HepG2 (cell line): ENCODE measurements at regions of chr16 and their contacts with region 1.

Region 1: DNA sequence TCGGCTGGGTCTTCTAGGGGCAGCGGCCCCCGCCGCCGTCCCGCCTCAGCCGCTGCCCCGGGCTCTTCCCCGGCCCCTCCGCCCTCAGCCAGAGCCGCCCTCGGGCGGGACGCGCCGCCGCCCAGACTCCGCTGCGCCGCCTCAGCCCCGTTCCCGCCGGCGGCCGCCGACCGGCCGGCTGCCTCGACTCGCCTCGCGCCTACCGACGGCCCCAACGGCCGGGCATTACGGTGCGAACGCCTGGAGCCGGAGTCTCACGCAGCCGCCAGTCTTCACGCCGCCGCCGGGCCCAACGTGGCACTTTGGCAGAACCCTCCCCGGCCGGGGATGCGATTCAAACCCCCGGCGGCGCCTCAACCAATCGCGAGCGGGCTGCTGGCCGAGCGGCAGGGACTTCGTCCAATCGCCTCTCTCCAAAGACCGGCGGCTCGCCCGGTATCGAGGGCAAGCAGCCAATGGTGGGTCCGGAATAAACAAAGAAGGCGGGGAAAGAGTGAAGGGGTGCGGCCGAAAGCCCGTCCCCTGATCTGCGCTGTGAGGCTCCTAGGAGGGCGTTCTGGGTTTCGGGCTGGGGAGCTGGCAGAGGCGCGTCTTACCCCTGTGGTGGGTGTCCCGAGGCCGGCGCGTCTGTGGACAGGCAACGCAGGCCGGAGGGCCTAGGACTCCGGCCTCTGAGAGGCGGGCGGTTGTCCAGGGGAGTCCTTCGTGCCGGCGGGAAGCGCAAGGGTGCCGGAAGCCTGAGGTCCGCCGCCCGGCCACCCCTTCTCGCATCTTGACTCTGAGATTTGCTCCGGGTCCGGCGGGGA is at the start of gene CDR2:
- DNase-seq: peak; percentile 98
- ATAC-seq: peak; percentile 93
- H3K4me3 ChIP-seq: peak within 1 kb of the TSS; percentile 81 to 98 (median 87)
- H3K27ac ChIP-seq: peak within 1 kb of the TSS; percentile 85
- H3K4me1 ChIP-seq: peaks cover 52% of the 10 kb centered on the region
- H3K27me3 ChIP-seq: no peaks in the 10 kb centered on the region; a peak in 1 of 5 replicates
- CTCF ChIP-seq: peak; percentile 8; the same call in 1 of the 2 replicates
- EP300 ChIP-seq: 0 out of 4 replicates have a peak, but pooled peaks of 1 of the 2 experiments have one; percentile 22
- POLR2A ChIP-seq: peak; percentile 91 to 93
- RAD21 ChIP-seq: peak; percentile 79
- total RNA-seq, gene CDR2: 59.0 and 76.7 TPM in 2 replicates

Region 2: DNA sequence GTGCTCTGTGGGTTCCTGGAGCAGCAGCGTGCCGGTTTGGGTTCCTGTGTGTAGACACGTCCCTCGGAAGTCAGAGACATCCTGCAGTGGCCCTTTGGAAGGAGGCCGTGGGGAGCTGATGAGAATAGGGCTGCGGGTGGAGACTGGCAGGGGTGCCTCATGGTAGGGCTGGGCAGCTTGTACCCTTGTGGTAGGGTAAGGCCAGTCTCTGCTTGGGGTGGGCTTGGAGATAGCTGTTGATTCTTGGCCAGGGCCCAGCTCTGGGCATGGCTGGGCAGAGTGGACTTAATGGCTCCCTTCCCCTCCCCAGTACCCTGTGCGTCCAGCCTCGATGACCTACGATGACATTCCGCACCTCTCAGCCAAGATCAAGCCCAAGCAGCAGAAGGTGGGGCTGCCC is 66.7 kb before region 1 on chr16:
- CTCF ChIA-PET with region 1: no interaction called
- POLR2A ChIA-PET with region 1: no interaction called
- in situ Hi-C with region 1: no loop called
- intact Hi-C with region 1: no loop called
- DNase-seq: no peak
- ATAC-seq: 0 out of 3 replicates have a peak, but pooled peaks have one; percentile 3
- H3K4me3 ChIP-seq: no peak overlapping the region
- H3K27ac ChIP-seq: no peak overlapping the region
- H3K4me1 ChIP-seq: no peaks in the 10 kb centered on the region
- H3K27me3 ChIP-seq: no peaks in the 10 kb centered on the region
- CTCF ChIP-seq: no peak
- EP300 ChIP-seq: no peak
- POLR2A ChIP-seq: no peak
- RAD21 ChIP-seq: no peak

Region 3: GRCh38 chr16:22321339-22322001 is 53.0 kb before region 1 on chr16:
- CTCF ChIA-PET with region 1: no interaction called
- POLR2A ChIA-PET with region 1: no interaction called
- in situ Hi-C with region 1: no loop called
- intact Hi-C with region 1: loop called (anchors 5 kb)
- DNase-seq: peak; percentile 59
- ATAC-seq: peak; percentile 36; the same call in 2 of the 3 replicates
- H3K4me3 ChIP-seq: no peak overlapping the region
- H3K27ac ChIP-seq: no peak overlapping the region
- H3K4me1 ChIP-seq: 0 out of 2 replicates have a peak, but pooled peaks cover 7% of the 10 kb centered on the region
- H3K27me3 ChIP-seq: no peaks in the 10 kb centered on the region
- CTCF ChIP-seq: peak; percentile 98
- EP300 ChIP-seq: no peak
- POLR2A ChIP-seq: no peak
- RAD21 ChIP-seq: peak; percentile 88

Region 4: GRCh38 chr16:22353191-22353919 is 21.2 kb before region 1 on chr16:
- CTCF ChIA-PET with region 1: no interaction called
- POLR2A ChIA-PET with region 1: interaction called, 27 read pairs
- in situ Hi-C with region 1: no loop called
- intact Hi-C with region 1: loop called (anchors 2 kb)
- DNase-seq: peak; percentile 66
- ATAC-seq: peak; percentile 62
- H3K4me3 ChIP-seq: peak overlapping the region in 1 of 3 experiments; percentile 6; a peak in 1 of 6 replicates
- H3K27ac ChIP-seq: peak overlapping the region; percentile 57
- H3K4me1 ChIP-seq: peaks cover 41% of the 10 kb centered on the region
- H3K27me3 ChIP-seq: no peaks in the 10 kb centered on the region
- CTCF ChIP-seq: no peak
- EP300 ChIP-seq: no peak
- POLR2A ChIP-seq: no peak
- RAD21 ChIP-seq: no peak

Region 5: GRCh38 chr16:22425036-22425801 is 50.7 kb after region 1 on chr16:
- CTCF ChIA-PET with region 1: no interaction called
- POLR2A ChIA-PET with region 1: no interaction called
- in situ Hi-C with region 1: loop called (anchors 10 kb)
- intact Hi-C with region 1: no loop called
- DNase-seq: no peak
- ATAC-seq: peak; percentile 26
- H3K4me3 ChIP-seq: no peak overlapping the region
- H3K27ac ChIP-seq: no peak overlapping the region
- H3K4me1 ChIP-seq: no peaks in the 10 kb centered on the region
- H3K27me3 ChIP-seq: no peaks in the 10 kb centered on the region
- CTCF ChIP-seq: no peak
- EP300 ChIP-seq: no peak
- POLR2A ChIP-seq: no peak
- RAD21 ChIP-seq: no peak

Region 6: DNA sequence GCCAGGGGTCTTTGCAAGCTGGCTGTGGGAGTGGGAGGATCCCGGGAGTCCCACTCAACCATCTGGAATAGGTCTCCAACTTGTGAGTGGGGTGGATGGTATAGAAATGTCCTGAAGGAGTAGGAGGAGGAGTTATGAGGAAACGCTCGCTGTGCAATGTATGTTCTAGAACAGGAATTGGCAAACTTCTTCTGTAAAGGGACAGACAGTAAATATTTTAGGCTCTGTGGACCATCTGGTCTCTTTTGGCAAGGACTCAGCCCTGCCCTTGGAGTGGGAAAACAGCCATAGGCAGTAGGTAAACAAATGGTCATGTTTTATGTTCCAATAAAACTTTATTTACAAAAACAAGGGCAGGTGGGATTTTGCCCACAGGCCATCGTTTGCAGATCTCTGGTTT is 285.4 kb after region 1 on chr16:
- CTCF ChIA-PET with region 1: no interaction called
- POLR2A ChIA-PET with region 1: no interaction called
- in situ Hi-C with region 1: no loop called
- intact Hi-C with region 1: no loop called
- DNase-seq: no peak
- ATAC-seq: no peak
- H3K4me3 ChIP-seq: no peak overlapping the region
- H3K27ac ChIP-seq: no peak overlapping the region
- H3K4me1 ChIP-seq: no peaks in the 10 kb centered on the region
- H3K27me3 ChIP-seq: peaks cover 0 to 47% of the 10 kb centered on the region in 2 experiments; a peak in 3 of 5 replicates
- CTCF ChIP-seq: no peak
- EP300 ChIP-seq: no peak
- POLR2A ChIP-seq: no peak
- RAD21 ChIP-seq: no peak